ENCODE measurements at regions of chr4 and their contacts with region 1.

Region 1: GRCh38 chr4:149095811-149096210 is 653.6 kb upstream of the NR3C2 start:
- DNase-seq: no peak
- ATAC-seq: no peak
- H3K4me3 ChIP-seq: no peak overlapping the region
- H3K27ac ChIP-seq: no peak overlapping the region
- H3K4me1 ChIP-seq: no peaks in the 10 kb centered on the region
- H3K27me3 ChIP-seq: no peaks in the 10 kb centered on the region
- CTCF ChIP-seq: no peak
- POLR2A ChIP-seq: no peak
- RAD21 ChIP-seq: no peak

Region 2: GRCh38 chr4:147570616-147571015 is 1525.2 kb before region 1 on chr4:
- CTCF ChIA-PET with region 1: no interaction called
- POLR2A ChIA-PET with region 1: interaction called, 13 read pairs
- dilution Hi-C with region 1: no loop called
- in situ Hi-C with region 1: no loop called
- intact Hi-C with region 1: no loop called
- DNase-seq: no peak
- ATAC-seq: peak; percentile 46; the same call in 1 of the 2 replicates
- H3K4me3 ChIP-seq: no peak overlapping the region
- H3K27ac ChIP-seq: no peak overlapping the region
- H3K4me1 ChIP-seq: peaks cover 3% of the 10 kb centered on the region; the same call in 1 of the 2 replicates
- H3K27me3 ChIP-seq: no peaks in the 10 kb centered on the region
- CTCF ChIP-seq: peak; percentile 31; the same call in 1 of the 2 replicates
- POLR2A ChIP-seq: no peak
- RAD21 ChIP-seq: no peak

Measured in IMR-90 (cell line).